ENCODE measurements at regions of chr1 and their contacts with region 1.

Region 1: DNA sequence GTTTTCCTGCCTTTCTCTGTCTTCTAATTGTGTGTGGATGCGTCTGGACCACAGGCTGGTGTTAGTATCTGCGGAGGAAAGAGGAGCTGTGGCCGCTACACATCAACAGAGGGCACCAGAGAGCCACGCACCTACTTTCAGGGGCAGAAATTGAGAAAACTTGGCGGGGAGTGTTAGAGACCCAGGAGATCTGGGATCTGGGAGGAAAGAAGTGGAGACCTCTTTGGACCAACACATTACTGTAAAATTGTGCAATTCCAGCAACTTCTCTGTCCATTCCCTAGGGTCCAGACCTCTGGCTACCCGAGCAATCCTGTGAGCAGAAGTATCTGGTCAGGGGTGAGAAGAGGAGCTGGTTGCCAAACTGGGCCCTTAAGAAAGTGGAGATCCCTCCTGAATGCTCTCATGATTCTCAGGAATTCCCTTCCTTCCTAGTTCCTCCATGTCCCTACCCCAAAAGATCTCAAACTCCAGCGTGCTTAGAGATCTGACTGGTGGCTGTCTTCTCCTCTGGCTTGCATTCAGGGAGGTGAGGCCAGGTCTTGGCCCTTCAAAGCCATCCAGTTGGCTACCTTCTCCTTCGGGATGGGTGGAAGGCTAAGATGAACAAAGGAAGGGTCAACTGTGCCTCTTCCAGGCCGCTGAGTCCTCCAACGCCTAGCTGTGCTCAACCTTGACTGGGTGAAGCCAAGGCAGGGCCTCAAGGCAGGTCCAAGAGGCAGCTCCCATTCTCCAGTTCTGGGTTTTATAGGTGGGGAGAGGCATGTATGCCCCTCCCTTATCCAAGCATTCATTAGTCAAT is 1.2 kb upstream of the KIRREL1 start:
- DNase-seq: peak; percentile 67
- H3K4me3 ChIP-seq: no peak overlapping the region
- H3K27ac ChIP-seq: peak overlapping the region; percentile 88 to 92 (median 90)
- H3K4me1 ChIP-seq: peaks cover 0 to 26% (median 8%) of the 10 kb centered on the region in 4 donors
- H3K27me3 ChIP-seq: peaks cover 20% of the 10 kb centered on the region
- CTCF ChIP-seq: peak; percentile 88 to 93 (median 90)
- EP300 ChIP-seq: no peak
- POLR2A ChIP-seq: no peak

Region 2: GRCh38 chr1:158035976-158036583 is 43.8 kb after region 1 on chr1:
- in situ Hi-C with region 1: no loop called
- intact Hi-C with region 1: loop called (anchors 5 kb)
- DNase-seq: peak; percentile 43
- H3K4me3 ChIP-seq: no peak overlapping the region
- H3K27ac ChIP-seq: no peak overlapping the region
- H3K4me1 ChIP-seq: peaks cover 0 to 9% (median 4%) of the 10 kb centered on the region in 4 donors
- H3K27me3 ChIP-seq: no peaks in the 10 kb centered on the region
- CTCF ChIP-seq: peak; percentile 74 to 82 (median 79)
- EP300 ChIP-seq: no peak
- POLR2A ChIP-seq: no peak

Region 3: DNA sequence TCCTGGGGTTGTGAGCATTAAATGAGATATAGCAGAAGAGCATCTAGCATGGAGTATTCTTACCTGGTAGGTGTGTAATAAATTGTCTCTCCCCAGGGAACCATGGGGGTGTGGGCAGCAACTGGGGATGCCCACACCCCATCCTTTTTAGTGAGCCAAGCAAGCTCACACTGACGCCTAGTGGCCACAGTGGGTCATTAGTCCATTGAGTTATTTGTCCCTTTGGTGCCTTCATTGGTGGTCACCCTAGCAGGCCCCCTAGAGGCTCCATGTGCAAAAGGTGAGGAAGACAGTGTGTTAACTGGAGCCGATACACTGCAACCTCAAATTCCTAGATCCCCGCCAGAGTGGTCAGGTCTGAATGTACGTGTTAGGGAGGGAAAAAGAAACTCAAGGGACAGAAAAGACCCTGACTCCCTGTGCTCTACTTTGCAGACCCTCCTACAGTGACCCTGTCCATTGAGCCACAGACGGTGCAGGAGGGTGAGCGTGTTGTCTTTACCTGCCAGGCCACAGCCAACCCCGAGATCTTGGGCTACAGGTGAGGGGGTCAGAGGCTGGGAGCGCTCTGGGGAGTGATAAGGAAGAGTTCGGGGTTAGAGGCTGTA is 95.2 kb after region 1 on chr1:
- in situ Hi-C with region 1: loop called in 2 of 4 experiments (anchors 10 to 25 kb)
- intact Hi-C with region 1: loop called (anchors 5 kb)
- DNase-seq: peak; percentile 40
- H3K4me3 ChIP-seq: no peak overlapping the region
- H3K27ac ChIP-seq: no peak overlapping the region
- H3K4me1 ChIP-seq: no peaks in the 10 kb centered on the region
- H3K27me3 ChIP-seq: no peaks in the 10 kb centered on the region
- CTCF ChIP-seq: peak; percentile 75 to 84 (median 81)
- EP300 ChIP-seq: no peak
- POLR2A ChIP-seq: no peak